Mammary epithelial cell (primary cell): ENCODE measurements at regions of chr14 and their contacts with region 1.

Region 1: DNA sequence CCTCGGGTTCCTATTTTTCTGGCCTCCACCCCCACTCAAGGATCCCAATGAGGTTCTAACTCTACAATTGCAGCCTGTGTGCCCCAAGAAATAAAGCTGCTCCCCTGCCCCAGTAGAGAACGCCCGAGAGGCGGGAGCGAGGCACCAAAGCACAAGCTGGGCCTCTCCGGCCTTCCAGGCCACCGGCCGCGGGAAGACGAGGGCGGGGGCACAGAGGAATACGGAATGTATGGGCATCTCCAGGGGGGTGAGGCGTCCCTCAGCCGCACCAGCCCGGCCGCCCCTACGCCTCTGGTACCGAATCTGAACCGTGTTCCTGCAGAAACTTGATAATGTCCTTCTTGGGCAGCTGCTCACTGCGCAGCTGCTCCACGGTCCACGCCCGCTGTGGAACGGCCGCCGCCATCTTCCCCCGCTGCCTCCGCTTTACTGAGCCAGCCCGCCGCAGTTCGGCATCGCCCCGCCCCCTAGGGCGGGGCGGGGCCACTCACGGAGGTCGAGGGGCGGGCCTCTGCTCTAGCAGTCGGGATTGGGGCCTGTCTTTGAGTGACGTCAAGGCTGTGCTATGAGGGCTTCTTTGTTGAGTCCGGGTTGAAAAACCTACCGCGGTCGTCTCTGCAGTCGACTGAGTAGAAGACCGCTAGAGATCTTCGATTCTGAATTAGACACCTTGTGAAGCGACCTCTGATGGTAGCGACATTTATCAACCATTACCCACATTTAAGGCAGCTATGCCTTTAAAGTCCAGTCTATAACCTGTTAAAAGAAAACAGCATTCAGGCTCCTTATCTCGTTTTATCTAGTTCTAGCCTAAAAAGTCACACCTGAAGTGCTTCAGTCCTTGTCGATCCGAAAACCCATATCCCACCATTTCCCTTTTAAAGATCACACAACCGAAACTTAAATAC is at the start of gene FKBP3:
- DNase-seq: peak; percentile 98
- H3K4me3 ChIP-seq: peak within 1 kb of the TSS; percentile 73 to 95 (median 89)
- H3K27ac ChIP-seq: peak within 1 kb of the TSS; percentile 73
- H3K4me1 ChIP-seq: peaks cover 13% of the 10 kb centered on the region
- H3K27me3 ChIP-seq: no peaks in the 10 kb centered on the region
- CTCF ChIP-seq: peak in 1 of 2 donors; percentile 39
- total RNA-seq, gene FKBP3: 21.0 to 62.8 TPM

Region 2: DNA sequence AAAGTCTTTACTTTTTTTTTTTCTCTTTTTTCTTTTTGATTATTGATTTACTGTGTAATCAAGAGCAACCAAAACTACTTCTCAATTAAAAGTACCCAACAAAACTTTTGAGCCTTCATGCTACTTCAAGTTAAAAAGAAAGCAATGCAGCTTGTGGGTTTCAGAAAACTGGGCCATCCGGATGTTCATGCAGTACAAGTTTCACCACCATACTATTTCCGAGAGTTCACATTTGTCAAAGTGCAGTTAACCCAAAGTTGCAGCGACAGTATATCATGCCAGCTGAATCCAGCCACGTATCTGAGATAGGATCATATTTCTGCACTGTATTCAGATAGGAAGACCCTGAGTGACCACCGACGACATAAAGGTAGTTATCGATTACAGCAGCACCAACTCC is 205.5 kb before region 1 on chr14:
- CTCF ChIA-PET with region 1: no interaction called
- dilution Hi-C with region 1: no loop called
- in situ Hi-C with region 1: no loop called
- intact Hi-C with region 1: no loop called
- DNase-seq: no peak
- H3K4me3 ChIP-seq: no peak overlapping the region
- H3K27ac ChIP-seq: no peak overlapping the region
- H3K4me1 ChIP-seq: no peaks in the 10 kb centered on the region
- H3K27me3 ChIP-seq: no peaks in the 10 kb centered on the region
- CTCF ChIP-seq: no peak

Region 3: DNA sequence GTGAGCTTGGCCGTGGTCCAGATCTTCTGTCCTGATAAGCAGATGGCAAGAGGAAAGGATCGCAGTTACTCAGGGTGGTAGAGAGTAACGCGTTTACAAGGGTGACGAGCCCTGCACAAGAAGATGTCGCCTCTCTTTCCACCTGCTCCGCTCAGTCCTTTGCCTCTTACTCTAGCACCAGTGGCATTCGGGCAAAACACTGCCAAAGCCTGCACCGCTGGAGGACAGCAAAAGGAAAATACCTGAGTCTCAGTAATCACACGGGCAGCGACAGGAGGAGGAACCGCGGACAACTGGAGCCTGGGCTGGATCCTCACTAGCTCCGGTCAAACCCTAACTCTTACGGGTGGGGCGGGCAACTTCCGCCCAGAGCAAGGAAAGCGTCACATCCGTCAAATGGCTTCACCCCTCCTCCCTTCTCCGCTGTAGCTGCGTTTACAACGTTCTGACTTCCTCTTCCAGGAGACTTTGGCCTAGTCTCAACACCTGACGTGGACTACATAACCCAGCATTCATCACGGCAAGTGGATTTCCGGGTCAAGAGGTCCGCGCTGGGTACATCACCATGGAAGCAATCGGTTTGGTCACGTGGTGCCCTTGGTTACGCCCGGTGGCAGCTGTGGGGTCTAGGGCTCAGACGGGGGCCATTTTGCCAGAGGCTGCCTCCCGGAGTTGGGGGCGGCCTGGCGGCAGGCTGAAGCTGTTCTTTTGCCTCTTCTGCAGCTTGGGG is 172.5 kb before region 1 on chr14 and contains the starts of genes KLHL28 and TOGARAM1:
- CTCF ChIA-PET with region 1: no interaction called
- dilution Hi-C with region 1: no loop called
- in situ Hi-C with region 1: no loop called
- intact Hi-C with region 1: loop called (anchors 1 kb)
- DNase-seq: peak; percentile 100
- H3K4me3 ChIP-seq: peak within 1 kb of the TSS; percentile 86 to 98 (median 95)
- H3K27ac ChIP-seq: peak within 1 kb of the TSS; percentile 85
- H3K4me1 ChIP-seq: peaks cover 6% of the 10 kb centered on the region
- H3K27me3 ChIP-seq: no peaks in the 10 kb centered on the region
- CTCF ChIP-seq: no peak
- total RNA-seq, gene KLHL28: 10.2 to 20.3 TPM
- total RNA-seq, gene TOGARAM1: 10.4 to 18.7 TPM

Region 4: DNA sequence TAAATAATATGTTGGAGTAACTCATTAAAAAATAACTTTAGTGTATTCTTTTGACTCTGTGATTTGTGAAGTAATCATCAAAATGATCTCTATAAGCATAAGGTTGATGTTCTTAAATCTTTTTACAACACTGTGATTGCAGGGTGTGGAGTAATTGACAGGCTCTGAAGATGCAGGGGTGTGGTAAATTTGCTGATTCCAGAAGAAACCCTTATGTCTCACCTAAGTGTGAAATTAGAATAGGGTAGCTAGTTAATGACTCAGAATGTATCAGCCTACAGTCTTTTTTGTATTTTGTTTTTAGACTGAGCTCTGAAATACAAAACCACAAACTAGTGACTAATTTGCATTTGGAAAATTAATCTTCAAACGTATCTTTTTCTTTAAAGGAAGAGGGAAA is 44.5 kb before region 1 on chr14:
- CTCF ChIA-PET with region 1: no interaction called
- dilution Hi-C with region 1: no loop called
- in situ Hi-C with region 1: no loop called
- intact Hi-C with region 1: loop called (anchors 5 kb)
- DNase-seq: peak; percentile 76
- H3K4me3 ChIP-seq: peak overlapping the region in 1 of 3 experiments; percentile 10
- H3K27ac ChIP-seq: no peak overlapping the region
- H3K4me1 ChIP-seq: peaks cover 38% of the 10 kb centered on the region
- H3K27me3 ChIP-seq: no peaks in the 10 kb centered on the region
- CTCF ChIP-seq: no peak

Region 5: DNA sequence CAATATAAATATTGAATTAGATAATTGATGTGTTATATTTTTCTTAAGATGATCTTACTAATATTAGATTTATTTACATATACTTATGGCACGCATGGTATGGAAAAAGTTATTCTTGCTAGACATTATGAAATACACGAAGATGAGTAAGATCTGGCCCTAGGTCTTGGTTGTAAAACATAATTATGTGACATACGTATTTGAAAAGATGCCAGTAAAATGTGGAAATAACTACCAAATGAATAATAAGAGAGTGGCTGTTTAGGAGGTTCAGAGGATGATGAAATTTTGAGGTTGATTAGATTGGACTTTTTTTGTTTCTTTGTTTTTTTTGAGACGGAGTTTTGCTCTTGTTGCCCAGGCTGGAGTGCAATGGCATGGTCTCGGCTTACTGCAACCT is 42.8 kb after region 1 on chr14:
- CTCF ChIA-PET with region 1: no interaction called
- dilution Hi-C with region 1: no loop called
- in situ Hi-C with region 1: no loop called
- intact Hi-C with region 1: loop called (anchors 2 kb)
- DNase-seq: peak; percentile 89
- H3K4me3 ChIP-seq: no peak overlapping the region
- H3K27ac ChIP-seq: no peak overlapping the region
- H3K4me1 ChIP-seq: no peaks in the 10 kb centered on the region
- H3K27me3 ChIP-seq: no peaks in the 10 kb centered on the region
- CTCF ChIP-seq: no peak

Region 6: DNA sequence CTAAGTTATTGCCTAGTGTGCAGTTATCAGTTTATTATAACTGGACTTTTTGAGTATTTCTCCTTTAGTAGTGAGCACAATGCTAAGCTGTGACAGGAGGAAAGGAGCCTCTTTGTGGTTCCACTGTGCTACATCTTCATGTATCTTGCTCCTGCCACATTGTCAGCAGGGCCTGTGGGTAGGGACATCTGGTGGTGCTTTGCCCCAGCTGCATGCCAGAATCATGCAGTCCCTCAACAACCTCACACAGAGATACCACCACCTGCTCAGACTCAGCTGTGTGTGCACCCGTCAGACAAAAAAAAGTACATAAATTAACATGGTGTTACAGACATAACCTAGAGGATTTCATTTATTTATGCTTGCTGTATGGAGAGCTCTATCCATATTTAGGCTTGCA is 67.6 kb after region 1 on chr14:
- CTCF ChIA-PET with region 1: no interaction called
- dilution Hi-C with region 1: no loop called
- in situ Hi-C with region 1: no loop called
- intact Hi-C with region 1: loop called (anchors 2 kb)
- DNase-seq: no peak
- H3K4me3 ChIP-seq: no peak overlapping the region
- H3K27ac ChIP-seq: no peak overlapping the region
- H3K4me1 ChIP-seq: peaks cover 18% of the 10 kb centered on the region
- H3K27me3 ChIP-seq: no peaks in the 10 kb centered on the region
- CTCF ChIP-seq: peak; percentile 10 to 52

Region 7: DNA sequence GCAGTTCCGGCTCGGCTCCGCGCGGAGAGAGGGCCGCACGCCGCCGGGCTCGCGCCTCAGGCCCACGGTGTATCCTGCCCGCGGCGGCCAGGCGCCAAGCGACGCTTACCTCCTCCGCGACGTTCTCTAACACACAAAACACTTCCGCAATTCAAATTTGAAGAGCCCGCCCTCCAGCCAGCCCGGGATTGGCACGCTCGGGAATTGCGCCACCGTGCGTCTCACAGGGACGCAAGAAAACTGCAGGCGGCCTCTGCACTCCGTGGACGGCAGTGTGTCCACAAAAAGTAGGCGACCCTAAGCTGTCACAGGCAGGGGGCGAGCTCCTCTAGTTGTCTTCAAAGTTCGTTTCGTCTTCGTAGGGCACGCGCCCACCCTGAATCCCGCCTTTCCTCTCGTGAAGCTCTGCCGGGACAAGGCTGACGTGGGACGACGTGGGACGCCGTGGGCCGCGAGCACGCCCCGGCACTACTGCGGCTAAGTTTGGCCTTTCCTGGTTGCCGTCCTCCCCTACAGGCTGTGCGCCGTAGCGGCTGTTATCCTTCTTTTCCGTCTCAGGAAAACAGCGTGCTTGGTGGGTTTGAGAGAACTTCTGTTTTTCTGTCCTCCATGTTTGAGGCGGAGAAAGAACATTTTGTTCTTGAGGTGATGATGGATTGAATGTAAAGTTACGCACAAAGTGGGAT is 118.9 kb after region 1 on chr14 and contains the start of gene MIS18BP1:
- CTCF ChIA-PET with region 1: interaction called, 23 read pairs
- dilution Hi-C with region 1: no loop called
- in situ Hi-C with region 1: loop called in 1 of 2 experiments (anchors 25 kb)
- intact Hi-C with region 1: loop called (anchors 1 kb)
- DNase-seq: peak; percentile 97
- H3K4me3 ChIP-seq: peak within 1 kb of the TSS; percentile 69 to 98 (median 94)
- H3K27ac ChIP-seq: peak within 1 kb of the TSS; percentile 81
- H3K4me1 ChIP-seq: peaks cover 18% of the 10 kb centered on the region
- H3K27me3 ChIP-seq: no peaks in the 10 kb centered on the region
- CTCF ChIP-seq: peak; percentile 48 to 68
- total RNA-seq, gene MIS18BP1: 22.5 to 25.8 TPM

Region 8: DNA sequence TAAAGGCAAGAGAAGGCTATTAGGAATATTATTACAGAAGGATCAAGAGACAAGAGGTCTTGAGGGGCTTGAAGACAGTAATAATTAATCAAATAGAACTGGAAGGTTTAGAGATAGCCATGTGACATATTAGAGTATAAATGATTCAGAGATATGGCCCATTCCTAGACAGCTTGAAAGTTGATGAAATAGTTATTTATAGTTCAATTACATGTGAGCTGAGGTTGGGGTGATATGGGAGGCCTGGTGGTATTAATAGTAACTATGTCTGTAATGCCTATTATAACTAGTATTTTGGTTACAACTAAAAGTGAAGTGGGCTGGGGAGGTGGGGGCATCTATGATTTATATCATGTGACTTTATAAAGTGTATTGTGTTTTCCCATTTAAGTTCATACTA is 132.8 kb after region 1 on chr14:
- CTCF ChIA-PET with region 1: no interaction called
- dilution Hi-C with region 1: no loop called
- in situ Hi-C with region 1: loop called in 1 of 2 experiments (anchors 25 kb)
- intact Hi-C with region 1: loop called (anchors 1 kb)
- DNase-seq: no peak
- H3K4me3 ChIP-seq: no peak overlapping the region
- H3K27ac ChIP-seq: no peak overlapping the region
- H3K4me1 ChIP-seq: no peaks in the 10 kb centered on the region
- H3K27me3 ChIP-seq: no peaks in the 10 kb centered on the region
- CTCF ChIP-seq: no peak

Region 9: DNA sequence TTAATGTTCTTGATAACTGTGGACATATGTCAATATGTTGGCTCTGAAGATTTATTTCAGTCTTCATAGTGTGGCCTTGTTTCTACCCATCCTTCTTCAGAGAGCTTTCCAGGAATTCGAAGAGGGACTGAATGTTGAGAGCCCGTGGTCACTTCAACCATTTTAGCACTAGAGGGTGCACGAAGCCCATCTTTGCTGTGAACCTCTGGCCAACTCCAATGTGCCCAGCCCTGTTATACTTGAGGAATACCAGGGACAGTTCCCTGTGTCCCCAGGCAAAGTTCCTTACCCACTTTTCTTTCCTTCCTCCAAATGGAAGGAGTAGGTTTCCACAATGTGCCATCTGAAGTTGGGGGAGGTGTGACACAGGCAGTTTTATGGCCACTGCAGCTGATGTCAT is 913.8 kb after region 1 on chr14:
- CTCF ChIA-PET with region 1: no interaction called
- dilution Hi-C with region 1: no loop called
- in situ Hi-C with region 1: no loop called
- intact Hi-C with region 1: no loop called
- DNase-seq: peak; percentile 56
- H3K4me3 ChIP-seq: no peak overlapping the region
- H3K27ac ChIP-seq: no peak overlapping the region
- H3K4me1 ChIP-seq: no peaks in the 10 kb centered on the region
- H3K27me3 ChIP-seq: no peaks in the 10 kb centered on the region
- CTCF ChIP-seq: peak; percentile 24 to 42